Naive thymus-derived CD8-positive, alpha-beta T cell (primary cell): ENCODE measurements at regions of chr12 and their contacts with region 1.

Region 1: GRCh38 chr12:7859552-7859951 is 13.2 kb downstream of the SLC2A14 start:
- DNase-seq: no peak
- ATAC-seq: no peak
- H3K4me3 Mint-ChIP-seq: no peak overlapping the region
- H3K27ac Mint-ChIP-seq: peak overlapping the region in 4 of 10 donors; percentile 52 to 89 (median 71)
- H3K4me1 Mint-ChIP-seq: peaks cover 5 to 16% (median 9%) of the 10 kb centered on the region in 4 donors
- H3K27me3 Mint-ChIP-seq: no peaks in the 10 kb centered on the region

Region 2: GRCh38 chr12:7832059-7832696 is 27.4 kb before region 1 on chr12:
- POLR2A ChIA-PET with region 1: no interaction called
- DNase-seq: peak in 3 of 10 donors; percentile 10 to 37 (median 14)
- ATAC-seq: peak; percentile 62 to 63
- H3K4me3 Mint-ChIP-seq: no peak overlapping the region
- H3K27ac Mint-ChIP-seq: peak overlapping the region in 1 of 10 donors; percentile 20
- H3K4me1 Mint-ChIP-seq: no peaks in the 10 kb centered on the region
- H3K27me3 Mint-ChIP-seq: no peaks in the 10 kb centered on the region

Region 3: DNA sequence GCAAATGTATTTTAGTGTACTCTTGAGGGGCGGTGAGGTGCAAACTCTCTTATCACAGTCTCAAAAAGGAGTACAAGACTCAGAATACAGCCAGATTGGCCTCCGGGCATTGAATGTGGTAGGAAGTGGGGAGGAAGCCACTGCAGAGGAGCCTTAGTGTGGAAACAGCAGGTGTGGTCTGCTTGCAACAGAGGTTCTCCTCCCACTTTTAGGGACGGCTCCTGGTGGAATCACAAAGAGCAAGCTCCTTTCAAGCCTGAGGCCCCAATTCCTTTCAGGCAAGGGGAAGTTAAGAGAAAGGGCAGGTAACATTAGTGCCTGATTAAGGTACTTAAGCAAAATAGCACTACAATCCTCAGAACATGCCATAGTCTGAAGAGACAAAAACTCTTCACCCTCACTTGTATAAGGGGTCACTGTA is 100.2 kb after region 1 on chr12:
- POLR2A ChIA-PET with region 1: interaction called, 10 read pairs
- DNase-seq: peak in 9 of 10 donors; percentile 11 to 71 (median 42)
- ATAC-seq: peak; percentile 40 to 52
- H3K4me3 Mint-ChIP-seq: peak overlapping the region; percentile 80 to 95 (median 91)
- H3K27ac Mint-ChIP-seq: peak overlapping the region; percentile 89 to 99 (median 97)
- H3K4me1 Mint-ChIP-seq: peaks cover 19 to 48% (median 40%) of the 10 kb centered on the region in 4 donors
- H3K27me3 Mint-ChIP-seq: no peaks in the 10 kb centered on the region

Region 4: GRCh38 chr12:7995266-7995963 is 135.9 kb after region 1 on chr12:
- POLR2A ChIA-PET with region 1: no interaction called
- DNase-seq: peak; percentile 53 to 94 (median 80)
- ATAC-seq: peak; percentile 100
- H3K4me3 Mint-ChIP-seq: no peak overlapping the region
- H3K27ac Mint-ChIP-seq: no peak overlapping the region
- H3K4me1 Mint-ChIP-seq: peaks cover 3 to 13% (median 9%) of the 10 kb centered on the region in 4 donors
- H3K27me3 Mint-ChIP-seq: no peaks in the 10 kb centered on the region